Mammary epithelial cell (primary cell): ENCODE measurements at regions of chr2 and their contacts with region 1.

Region 1: GRCh38 chr2:60674524-60675165 is 81.4 kb upstream of the PAPOLG start:
- DNase-seq: peak; percentile 53
- H3K4me3 ChIP-seq: no peak overlapping the region
- H3K27ac ChIP-seq: no peak overlapping the region
- H3K4me1 ChIP-seq: no peaks in the 10 kb centered on the region
- H3K27me3 ChIP-seq: no peaks in the 10 kb centered on the region
- CTCF ChIP-seq: peak; percentile 93 to 97

Region 2: DNA sequence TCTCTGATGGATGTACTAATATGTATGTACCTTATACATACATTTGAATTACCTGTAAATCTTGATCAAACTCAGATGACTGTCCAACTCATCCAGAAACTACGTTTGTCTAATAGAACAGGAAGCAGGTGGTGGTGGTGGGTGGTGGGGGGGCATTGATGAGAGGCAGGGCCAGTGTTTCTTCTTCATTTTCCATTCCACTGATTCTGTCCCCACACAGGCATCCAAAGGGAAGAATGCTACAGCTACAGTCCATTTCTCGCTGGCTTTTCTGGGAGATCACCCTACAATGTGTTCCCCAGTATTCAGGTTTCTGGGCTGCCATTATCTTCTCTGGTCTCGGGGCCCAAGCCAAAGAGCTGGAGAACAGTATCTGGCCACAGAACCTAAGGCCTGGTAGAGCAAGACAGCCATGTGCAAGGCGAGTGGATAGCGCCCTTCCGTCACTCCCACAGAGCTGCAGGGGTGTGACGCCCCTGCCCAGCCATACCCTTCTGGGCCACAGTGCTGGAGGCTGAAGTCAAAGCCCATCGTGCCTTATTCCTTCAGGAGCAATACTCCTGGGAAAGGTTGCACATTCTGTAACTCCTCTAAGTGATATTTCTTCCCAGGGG is 175.7 kb before region 1 on chr2:
- CTCF ChIA-PET with region 1: interaction called, 5 read pairs
- dilution Hi-C with region 1: no loop called
- in situ Hi-C with region 1: no loop called
- intact Hi-C with region 1: loop called (anchors 10 kb)
- DNase-seq: no peak
- H3K4me3 ChIP-seq: no peak overlapping the region
- H3K27ac ChIP-seq: no peak overlapping the region
- H3K4me1 ChIP-seq: peaks cover 31% of the 10 kb centered on the region
- H3K27me3 ChIP-seq: no peaks in the 10 kb centered on the region
- CTCF ChIP-seq: no peak

Region 3: DNA sequence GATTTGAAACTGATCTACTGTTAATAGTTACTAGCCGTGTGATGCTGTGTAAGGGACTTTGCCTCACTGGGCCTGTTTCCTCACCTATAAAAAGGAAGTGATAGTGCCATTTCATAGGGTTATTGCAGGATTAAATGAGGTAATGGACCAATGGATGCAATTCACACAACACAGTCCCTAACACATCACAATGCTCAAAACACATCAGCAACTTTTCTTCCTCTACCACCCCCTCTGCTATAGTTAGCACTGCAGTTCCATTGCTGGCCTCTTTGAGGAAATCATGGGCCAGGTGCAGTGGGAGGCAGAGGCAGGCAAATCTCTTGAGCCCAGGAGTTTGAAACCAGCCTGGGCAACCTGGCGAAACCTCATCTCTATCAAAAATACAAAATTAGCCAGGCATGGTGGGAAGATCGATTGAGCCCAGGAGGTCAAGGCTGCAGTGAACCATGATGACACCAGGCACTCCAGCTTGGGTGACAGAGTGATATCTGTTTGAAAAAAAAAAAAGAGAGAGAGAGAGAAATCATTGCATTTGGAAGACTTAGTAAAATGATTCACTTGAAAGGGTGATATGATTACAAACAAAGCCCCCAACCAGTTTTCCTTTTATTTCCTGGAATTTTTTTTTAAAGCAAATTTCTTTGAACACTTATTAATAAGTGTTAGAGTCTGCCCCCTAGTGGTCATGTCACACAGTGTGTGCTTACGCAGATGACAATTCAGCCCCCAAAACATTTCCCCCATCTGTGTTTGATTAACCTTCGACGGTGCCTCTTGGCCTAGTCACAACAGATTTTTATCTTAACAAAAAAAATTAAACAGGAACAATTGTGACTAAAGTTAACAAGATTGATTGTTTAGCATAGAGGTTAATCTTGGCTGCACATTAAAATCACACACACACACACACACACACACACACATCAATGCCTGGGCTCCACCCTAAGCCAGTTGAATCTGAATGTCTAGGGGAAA is 32.5 kb before region 1 on chr2:
- CTCF ChIA-PET with region 1: no interaction called
- dilution Hi-C with region 1: no loop called
- in situ Hi-C with region 1: no loop called
- intact Hi-C with region 1: loop called (anchors 1 kb)
- DNase-seq: peak; percentile 7
- H3K4me3 ChIP-seq: no peak overlapping the region
- H3K27ac ChIP-seq: no peak overlapping the region
- H3K4me1 ChIP-seq: no peaks in the 10 kb centered on the region
- H3K27me3 ChIP-seq: no peaks in the 10 kb centered on the region
- CTCF ChIP-seq: peak; percentile 75